Activated CD4-positive, alpha-beta T cell treated with anti-CD3 and anti-CD28 coated beads for 36 hours (primary cell): ENCODE measurements at regions of chr19 and their contacts with region 1.

Region 1: GRCh38 chr19:18785179-18786128 is 5.7 kb downstream of the COMP start:
- DNase-seq: peak; percentile 90
- ATAC-seq: peak; percentile 88
- H3K4me3 Mint-ChIP-seq: no peak overlapping the region
- H3K27ac Mint-ChIP-seq: no peak overlapping the region
- H3K4me1 Mint-ChIP-seq: peaks cover 31% of the 10 kb centered on the region
- H3K27me3 Mint-ChIP-seq: peaks cover 46% of the 10 kb centered on the region

Region 2: GRCh38 chr19:18436671-18437490 is 348.6 kb before region 1 on chr19:
- CTCF ChIA-PET with region 1: no interaction called
- POLR2A ChIA-PET with region 1: no interaction called
- intact Hi-C with region 1: loop called in 1 of 2 experiments (anchors 5 kb)
- DNase-seq: peak; percentile 80
- ATAC-seq: peak; percentile 62
- H3K4me3 Mint-ChIP-seq: peak overlapping the region; percentile 63
- H3K27ac Mint-ChIP-seq: no peak overlapping the region
- H3K4me1 Mint-ChIP-seq: peaks cover 21% of the 10 kb centered on the region
- H3K27me3 Mint-ChIP-seq: no peaks in the 10 kb centered on the region

Region 3: DNA sequence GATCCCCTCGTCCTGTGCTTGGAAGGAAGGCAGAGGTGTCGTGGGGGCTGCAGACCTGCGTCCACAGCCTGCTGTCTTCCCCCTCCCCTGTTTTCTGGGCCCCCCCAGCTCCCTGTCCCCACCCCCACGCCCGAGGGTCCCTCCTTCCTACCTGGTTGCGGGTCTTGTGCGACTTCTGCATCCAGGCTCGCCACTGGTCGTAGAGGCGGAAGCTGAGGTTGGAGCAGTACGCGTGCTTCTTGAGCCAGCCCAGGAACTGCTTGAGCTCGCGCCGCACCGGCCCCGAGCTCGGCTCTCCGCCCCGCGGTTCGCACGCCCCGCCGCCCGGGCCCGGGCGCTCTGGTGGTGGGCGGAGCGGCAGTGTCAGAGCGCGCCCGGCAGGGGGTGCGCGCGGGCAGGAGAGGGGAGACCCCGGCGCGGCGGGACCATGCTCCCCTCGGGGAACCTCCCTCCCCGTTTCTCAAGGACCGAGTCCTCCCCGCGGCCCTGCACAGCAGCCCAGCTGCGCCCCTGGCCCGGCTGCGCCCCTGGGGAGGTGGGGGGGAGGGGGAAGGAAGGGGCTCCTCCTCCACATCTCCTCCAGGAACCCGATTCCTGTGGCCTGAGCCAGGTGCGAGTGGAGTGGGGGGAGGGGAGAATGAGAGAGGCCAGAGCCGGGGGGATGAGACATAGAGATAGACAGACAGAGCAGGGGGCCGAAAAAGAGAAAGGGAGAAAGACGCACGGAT is 191.2 kb before region 1 on chr19:
- CTCF ChIA-PET with region 1: interaction called, 4 read pairs
- POLR2A ChIA-PET with region 1: no interaction called
- intact Hi-C with region 1: loop called (anchors 5 to 10 kb)
- DNase-seq: peak; percentile 87
- ATAC-seq: peak; percentile 72
- H3K4me3 Mint-ChIP-seq: peak overlapping the region; percentile 72
- H3K27ac Mint-ChIP-seq: peak overlapping the region; percentile 56
- H3K4me1 Mint-ChIP-seq: peaks cover 23% of the 10 kb centered on the region
- H3K27me3 Mint-ChIP-seq: peaks cover 3% of the 10 kb centered on the region

Region 4: GRCh38 chr19:18612772-18613588 is 172.5 kb before region 1 on chr19 and contains the start of gene TMEM59L:
- CTCF ChIA-PET with region 1: no interaction called
- POLR2A ChIA-PET with region 1: no interaction called
- intact Hi-C with region 1: loop called in 1 of 2 experiments (anchors 1 kb)
- DNase-seq: peak; percentile 70
- ATAC-seq: peak; percentile 53
- H3K4me3 Mint-ChIP-seq: peak within 1 kb of the TSS; percentile 57
- H3K27ac Mint-ChIP-seq: no peak within 1 kb of the TSS
- H3K4me1 Mint-ChIP-seq: peaks cover 16% of the 10 kb centered on the region
- H3K27me3 Mint-ChIP-seq: peaks cover 64% of the 10 kb centered on the region
- total RNA-seq, gene TMEM59L: 0.11 TPM in 1 of 2 experiments, not detected in the other

Region 5: DNA sequence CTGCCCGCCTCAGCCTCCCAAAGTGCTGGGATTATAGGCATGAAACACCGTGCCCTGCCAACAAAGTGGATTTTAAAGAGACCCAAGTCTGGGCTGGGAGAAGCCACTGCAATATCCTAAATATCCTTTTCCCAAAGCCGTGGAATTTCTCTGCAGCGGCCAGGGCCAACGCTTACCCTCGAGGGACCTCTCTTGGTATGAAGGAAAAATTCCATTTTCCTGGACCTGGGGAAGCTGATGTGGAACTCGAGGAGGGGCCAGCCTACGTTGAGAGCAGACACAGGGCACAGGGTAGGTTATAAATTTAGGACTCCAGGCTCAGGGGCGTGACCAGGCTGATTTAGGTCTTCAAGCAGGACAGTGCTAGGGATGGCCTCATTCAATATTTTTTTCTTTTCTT is 28.6 kb after region 1 on chr19:
- CTCF ChIA-PET with region 1: no interaction called
- POLR2A ChIA-PET with region 1: no interaction called
- intact Hi-C with region 1: no loop called
- DNase-seq: no peak
- ATAC-seq: no peak
- H3K4me3 Mint-ChIP-seq: no peak overlapping the region
- H3K27ac Mint-ChIP-seq: no peak overlapping the region
- H3K4me1 Mint-ChIP-seq: peaks cover 4% of the 10 kb centered on the region
- H3K27me3 Mint-ChIP-seq: peaks cover 8% of the 10 kb centered on the region

Region 6: DNA sequence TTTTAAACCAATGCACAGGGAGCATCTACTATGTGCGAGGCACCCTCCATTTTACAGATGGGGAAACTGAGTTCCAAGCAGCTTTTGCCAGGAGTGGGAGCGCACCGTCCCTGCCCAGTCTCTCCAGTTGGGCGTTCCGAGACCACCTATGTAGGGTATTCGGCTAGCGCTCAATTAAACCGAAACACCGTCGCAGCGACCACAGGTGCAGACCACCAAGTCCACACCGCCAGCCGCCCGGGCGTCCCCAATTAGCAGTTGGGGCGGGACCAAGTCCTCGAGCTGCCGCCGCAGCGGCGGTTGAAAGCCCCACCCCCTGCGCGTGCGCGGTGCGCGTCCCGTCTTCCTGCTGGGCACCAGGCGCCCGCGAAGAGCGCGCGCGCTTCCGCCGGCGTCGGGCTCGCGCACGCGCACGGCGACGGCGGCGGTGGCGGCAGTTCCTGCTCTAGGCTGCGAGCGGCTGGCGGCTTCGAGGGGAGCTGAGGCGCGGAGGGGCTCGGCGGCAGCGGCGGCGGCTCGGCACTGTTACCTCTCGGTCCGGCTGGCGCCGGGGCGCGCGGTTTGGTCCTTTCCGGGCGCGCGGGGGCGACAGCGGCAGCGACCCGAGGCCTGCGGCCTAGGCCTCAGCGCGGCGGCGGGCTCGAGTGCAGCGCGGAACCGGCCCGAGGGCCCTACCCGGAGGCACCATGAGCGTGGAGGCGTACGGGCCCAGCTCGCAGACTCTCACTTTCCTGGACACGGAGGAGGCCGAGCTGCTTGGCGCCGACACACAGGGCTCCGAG is 46.3 kb after region 1 on chr19 and contains the start of gene UPF1:
- CTCF ChIA-PET with region 1: no interaction called
- POLR2A ChIA-PET with region 1: no interaction called
- intact Hi-C with region 1: loop called in 1 of 2 experiments (anchors 1 kb)
- DNase-seq: peak; percentile 98
- ATAC-seq: peak; percentile 82
- H3K4me3 Mint-ChIP-seq: peak within 1 kb of the TSS; percentile 96
- H3K27ac Mint-ChIP-seq: peak within 1 kb of the TSS; percentile 90
- H3K4me1 Mint-ChIP-seq: peaks cover 34% of the 10 kb centered on the region
- H3K27me3 Mint-ChIP-seq: peaks cover 3% of the 10 kb centered on the region
- total RNA-seq, gene UPF1: 72.4 to 74.0 TPM

Region 7: GRCh38 chr19:18839465-18840287 is 54.2 kb after region 1 on chr19:
- CTCF ChIA-PET with region 1: no interaction called
- POLR2A ChIA-PET with region 1: no interaction called
- intact Hi-C with region 1: loop called in 1 of 2 experiments (anchors 5 kb)
- DNase-seq: no peak
- ATAC-seq: no peak
- H3K4me3 Mint-ChIP-seq: no peak overlapping the region
- H3K27ac Mint-ChIP-seq: no peak overlapping the region
- H3K4me1 Mint-ChIP-seq: peaks cover 92% of the 10 kb centered on the region
- H3K27me3 Mint-ChIP-seq: no peaks in the 10 kb centered on the region